Cardiac septum (tissue), 1 donor: ENCODE measurements at regions of chr19 and their contacts with region 1.

Region 1: DNA sequence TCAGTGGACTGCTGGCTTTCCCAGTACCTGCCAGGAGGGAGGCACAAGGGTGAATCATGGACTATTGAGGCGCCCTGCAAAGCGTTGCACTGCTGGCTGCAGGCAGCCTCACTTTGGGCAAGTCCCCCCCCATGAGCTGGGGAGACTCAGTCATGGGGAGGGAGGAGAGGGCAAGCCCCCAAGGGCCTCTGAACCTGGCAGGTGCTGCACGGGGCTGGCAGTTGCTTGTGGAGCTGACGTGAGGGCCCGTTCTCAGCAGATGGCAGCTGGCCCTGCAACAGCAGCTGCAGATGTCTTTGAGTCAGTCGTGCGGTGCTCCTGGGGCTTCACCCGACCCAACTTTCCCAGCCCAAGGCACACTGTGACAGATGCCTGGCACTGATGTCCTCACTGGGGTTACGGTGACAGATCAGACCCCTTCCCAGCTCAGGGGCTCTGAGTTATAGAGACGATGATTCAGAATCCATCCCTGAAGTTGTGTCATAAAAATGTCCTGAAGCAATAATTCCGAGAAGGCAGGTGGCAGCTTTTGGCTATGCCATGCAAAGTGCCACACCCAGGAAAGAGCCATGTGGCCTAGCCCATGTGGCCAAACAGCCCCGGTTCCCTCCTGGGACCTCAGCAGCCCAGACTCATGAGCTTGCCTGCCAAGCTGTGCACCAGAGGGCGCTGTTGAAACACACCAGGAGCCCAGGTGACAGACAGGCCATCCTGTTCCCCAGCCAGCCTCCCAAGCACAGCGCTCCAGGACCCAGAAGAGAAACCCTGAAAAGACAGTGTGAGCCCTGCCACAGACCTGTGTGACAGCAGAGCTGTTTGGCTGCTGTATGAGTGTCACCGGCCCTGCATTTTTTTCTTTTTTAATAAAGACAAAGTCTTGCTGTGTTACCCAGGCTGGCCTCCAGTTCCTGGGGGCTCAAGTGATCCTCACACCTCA is 53.6 kb upstream of the LDLR start:
- DNase-seq: peak; percentile 94

Region 2: GRCh38 chr19:10960314-10961072 is 75.2 kb before region 1 on chr19 and contains the start of gene SMARCA4:
- intact Hi-C with region 1: no loop called
- DNase-seq: peak; percentile 99
- total RNA-seq, gene SMARCA4: 52.2 TPM

Region 3: GRCh38 chr19:11050323-11051114 is 14.8 kb after region 1 on chr19:
- intact Hi-C with region 1: no loop called
- DNase-seq: no peak

Region 4: GRCh38 chr19:11181488-11181887 is 145.8 kb after region 1 on chr19:
- intact Hi-C with region 1: no loop called
- DNase-seq: no peak

Region 5: DNA sequence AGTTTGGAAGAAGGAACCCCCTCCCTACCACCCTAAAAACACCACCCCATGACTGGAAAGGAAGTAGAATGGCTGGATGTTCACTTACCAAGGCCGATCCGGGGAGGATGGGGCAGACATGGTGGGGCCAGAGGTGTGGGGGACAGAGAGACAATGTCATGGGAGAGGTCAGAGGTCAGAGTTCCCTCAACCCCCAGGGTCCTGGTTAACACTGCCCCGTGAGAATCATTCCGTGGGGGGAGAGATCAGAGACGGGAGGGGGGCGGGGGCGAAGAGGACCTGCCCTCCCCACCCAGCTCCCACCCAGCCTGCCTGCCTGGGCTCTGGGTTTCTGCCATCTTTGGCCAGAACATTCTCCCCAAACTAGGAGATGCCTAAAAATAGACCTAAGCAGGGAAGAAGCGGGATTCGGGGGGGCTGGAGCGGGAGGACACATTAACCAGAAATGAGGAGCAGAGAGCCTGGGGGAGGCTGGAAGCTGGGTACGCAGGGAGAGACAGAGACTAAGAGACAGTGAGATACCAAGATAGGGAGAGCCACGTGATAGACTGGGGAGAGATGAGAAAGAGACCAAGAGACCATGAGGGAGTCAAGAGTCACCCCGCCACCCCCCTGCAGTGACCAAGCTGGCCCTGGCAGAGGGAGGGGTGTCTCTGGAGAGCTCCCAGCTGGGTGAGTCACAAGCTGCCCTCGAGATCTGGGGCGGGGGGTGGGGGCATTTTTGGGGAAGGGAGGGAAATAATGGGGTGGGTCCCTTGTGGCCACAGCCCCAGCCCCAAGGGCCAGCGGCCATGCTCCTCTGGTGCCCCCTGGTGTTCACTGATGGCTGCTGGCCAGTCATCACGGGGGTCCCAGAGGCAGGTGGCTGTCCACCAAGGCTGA is 167.7 kb after region 1 on chr19:
- intact Hi-C with region 1: loop called (anchors 10 kb)
- DNase-seq: peak; percentile 86